Heart left ventricle (tissue), 16 donors: ENCODE measurements at regions of chr19 and their contacts with region 1.

Region 1: DNA sequence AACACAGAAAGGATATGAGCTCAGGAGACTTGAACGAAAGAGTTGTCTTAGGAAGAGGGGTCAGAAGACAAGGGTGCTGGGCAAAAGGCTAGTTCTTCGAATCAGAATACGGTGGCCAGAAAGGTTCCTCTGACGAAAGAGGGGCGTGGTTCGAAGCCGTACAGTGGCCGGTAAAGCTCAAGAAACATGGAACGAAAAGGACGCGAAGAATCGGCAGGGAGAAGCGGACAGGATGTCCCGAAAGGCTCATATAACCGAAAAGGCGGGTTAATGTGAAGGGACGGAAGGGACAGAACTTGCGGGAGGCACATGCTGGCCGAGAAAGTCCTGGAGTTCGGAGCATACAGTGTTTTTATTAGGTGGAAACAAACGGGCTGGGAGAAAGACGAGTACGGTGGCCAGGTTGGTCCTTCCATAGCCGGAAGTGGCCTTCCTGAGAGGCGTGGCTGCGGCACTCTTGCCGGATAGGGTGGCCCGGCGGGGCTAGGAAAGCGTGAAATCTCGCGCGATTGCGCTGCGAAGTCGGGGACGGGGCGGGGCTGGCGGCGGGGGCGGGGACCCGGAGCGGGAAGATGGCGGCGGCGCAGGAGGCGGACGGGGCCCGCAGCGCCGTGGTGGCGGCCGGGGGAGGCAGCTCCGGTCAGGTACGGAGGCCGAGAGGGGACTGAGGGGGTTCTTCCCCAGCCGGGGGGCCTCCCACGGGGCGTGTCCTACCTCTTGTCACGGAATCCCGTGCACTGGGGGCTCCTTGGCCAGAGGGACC is at the start of gene CLPTM1:
- DNase-seq: peak; percentile 98 to 99 (median 98)
- ATAC-seq: peak; percentile 95 to 97 (median 96)
- H3K4me3 ChIP-seq: peak within 1 kb of the TSS; percentile 70 to 100 (median 90)
- H3K27ac ChIP-seq: peak within 1 kb of the TSS; percentile 89 to 98 (median 95)
- H3K4me1 ChIP-seq: peaks cover 0 to 64% (median 41%) of the 10 kb centered on the region in 12 donors
- H3K27me3 ChIP-seq: no peaks in the 10 kb centered on the region
- CTCF ChIP-seq: peak in 1 of 12 donors; percentile 8
- POLR2A ChIP-seq: peak in 1 of 2 donors; percentile 28
- total RNA-seq, gene CLPTM1: 89.2 to 118 (median 96.0) TPM

Region 2: GRCh38 chr19:44782729-44783128 is 172.3 kb before region 1 on chr19:
- intact Hi-C with region 1: loop called in 1 of 10 experiments (anchors 10 kb)
- DNase-seq: no peak
- ATAC-seq: no peak
- H3K4me3 ChIP-seq: no peak overlapping the region
- H3K27ac ChIP-seq: no peak overlapping the region
- H3K4me1 ChIP-seq: peaks cover 0 to 9% (median 4%) of the 10 kb centered on the region in 12 donors
- H3K27me3 ChIP-seq: peaks cover 0 to 5% (median 2%) of the 10 kb centered on the region in 9 donors
- CTCF ChIP-seq: no peak
- POLR2A ChIP-seq: no peak

Region 3: GRCh38 chr19:44800461-44800860 is 154.5 kb before region 1 on chr19:
- intact Hi-C with region 1: loop called in 1 of 10 experiments (anchors 5 kb)
- DNase-seq: peak; percentile 85 to 92 (median 88)
- ATAC-seq: peak; percentile 82 to 90 (median 88)
- H3K4me3 ChIP-seq: no peak overlapping the region
- H3K27ac ChIP-seq: no peak overlapping the region
- H3K4me1 ChIP-seq: peaks cover 0 to 23% (median 14%) of the 10 kb centered on the region in 12 donors
- H3K27me3 ChIP-seq: no peaks in the 10 kb centered on the region
- CTCF ChIP-seq: peak; percentile 86 to 96 (median 91)
- POLR2A ChIP-seq: no peak

Region 4: DNA sequence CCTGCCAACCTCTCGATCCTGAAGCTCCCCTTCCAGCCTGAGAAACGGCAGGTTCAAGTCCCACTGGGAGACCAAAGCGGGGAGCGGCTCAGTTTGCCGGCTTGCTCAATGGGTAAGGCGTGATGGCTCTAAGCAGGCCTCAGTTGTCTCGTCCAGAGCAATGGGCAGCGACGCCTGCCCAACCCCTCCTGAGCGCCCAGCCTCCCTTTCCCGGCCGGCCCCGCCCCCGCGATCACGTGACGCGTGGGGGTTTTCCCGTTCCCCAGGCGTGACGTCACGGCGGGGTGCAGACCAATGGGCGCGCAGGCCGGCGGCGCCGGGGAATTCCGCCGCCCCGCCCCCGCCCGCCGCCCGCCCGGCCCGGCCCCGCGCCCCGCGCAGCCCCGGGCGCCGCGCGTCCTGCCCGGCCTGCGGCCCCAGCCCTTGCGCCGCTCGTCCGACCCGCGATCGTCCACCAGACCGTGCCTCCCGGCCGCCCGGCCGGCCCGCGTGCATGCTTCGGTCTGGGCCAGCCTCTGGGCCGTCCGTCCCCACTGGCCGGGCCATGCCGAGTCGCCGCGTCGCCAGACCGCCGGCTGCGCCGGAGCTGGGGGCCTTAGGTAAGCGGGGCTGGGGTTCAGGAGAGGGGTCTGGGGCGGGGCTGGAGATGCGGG is 46.2 kb after region 1 on chr19 and contains the start of gene RELB:
- intact Hi-C with region 1: loop called in 4 of 10 experiments (anchors 2 to 5 kb)
- DNase-seq: peak; percentile 96 to 98 (median 97)
- ATAC-seq: peak; percentile 28 to 71 (median 62)
- H3K4me3 ChIP-seq: peak within 1 kb of the TSS; percentile 52 to 95 (median 88)
- H3K27ac ChIP-seq: peak within 1 kb of the TSS; percentile 88 to 100 (median 98)
- H3K4me1 ChIP-seq: peaks cover 0 to 14% (median 10%) of the 10 kb centered on the region in 12 donors
- H3K27me3 ChIP-seq: no peaks in the 10 kb centered on the region
- CTCF ChIP-seq: no peak
- POLR2A ChIP-seq: no peak
- total RNA-seq, gene RELB: 2.8 to 23.2 (median 6.7) TPM

Region 5: DNA sequence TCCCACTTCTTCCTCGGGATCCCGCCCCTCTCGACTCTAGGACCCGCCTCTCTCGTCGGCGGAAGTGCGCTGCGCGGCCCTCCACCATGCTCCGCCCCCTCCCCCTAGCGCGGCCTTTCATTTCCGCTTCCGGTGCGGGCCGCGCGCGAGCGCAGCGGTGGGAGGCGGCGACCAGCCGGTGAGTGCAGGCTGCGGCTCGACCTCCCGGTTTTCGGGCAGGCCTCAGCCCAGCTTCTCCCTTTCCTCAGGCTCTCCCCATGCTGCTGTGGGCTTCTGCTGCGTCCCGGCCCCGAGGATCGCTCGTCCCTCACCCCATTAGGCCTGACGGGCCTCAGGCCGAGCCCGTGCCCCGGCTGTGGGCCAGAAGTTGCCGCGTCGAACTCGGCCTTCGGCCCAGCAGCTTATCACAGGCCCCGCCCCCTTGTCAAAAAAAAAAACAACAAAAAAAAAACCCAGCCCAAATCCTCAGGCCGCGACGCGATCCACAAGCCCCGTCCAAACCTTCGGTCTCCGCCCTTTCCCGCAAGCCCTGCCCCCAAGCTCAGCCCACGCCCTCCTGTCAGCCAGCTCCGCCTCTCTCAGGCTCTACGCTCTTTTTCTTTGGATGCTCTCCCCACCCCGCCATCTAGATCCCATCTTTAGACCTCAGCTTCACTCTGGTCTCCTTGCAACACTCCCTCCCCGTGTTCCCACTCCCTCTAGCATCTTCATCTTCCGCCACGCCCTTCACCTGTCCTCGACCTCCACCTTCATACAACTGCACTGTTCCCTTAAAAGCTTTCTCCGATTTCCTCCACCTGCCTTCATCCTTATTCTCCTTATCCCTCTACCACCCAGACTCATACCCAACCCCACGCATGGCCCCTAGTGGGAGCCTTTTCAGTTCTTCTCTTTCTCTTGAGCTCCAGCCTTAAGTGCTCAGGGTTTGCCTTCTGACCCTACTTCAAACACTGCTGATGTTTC is 84.2 kb after region 1 on chr19 and contains the start of gene CLASRP:
- intact Hi-C with region 1: loop called in 1 of 10 experiments (anchors 1 kb)
- DNase-seq: peak; percentile 93 to 94 (median 94)
- ATAC-seq: peak; percentile 95 to 99 (median 98)
- H3K4me3 ChIP-seq: peak within 1 kb of the TSS; percentile 73 to 99 (median 91)
- H3K27ac ChIP-seq: peak within 1 kb of the TSS; percentile 90 to 97 (median 96)
- H3K4me1 ChIP-seq: peaks cover 6 to 40% (median 31%) of the 10 kb centered on the region in 12 donors
- H3K27me3 ChIP-seq: no peaks in the 10 kb centered on the region
- CTCF ChIP-seq: no peak
- POLR2A ChIP-seq: peak in 1 of 2 donors; percentile 88
- total RNA-seq, gene CLASRP: 26.0 to 68.2 (median 32.4) TPM